ENCODE measurements at regions of chr17 and their contacts with region 1.

Region 1: DNA sequence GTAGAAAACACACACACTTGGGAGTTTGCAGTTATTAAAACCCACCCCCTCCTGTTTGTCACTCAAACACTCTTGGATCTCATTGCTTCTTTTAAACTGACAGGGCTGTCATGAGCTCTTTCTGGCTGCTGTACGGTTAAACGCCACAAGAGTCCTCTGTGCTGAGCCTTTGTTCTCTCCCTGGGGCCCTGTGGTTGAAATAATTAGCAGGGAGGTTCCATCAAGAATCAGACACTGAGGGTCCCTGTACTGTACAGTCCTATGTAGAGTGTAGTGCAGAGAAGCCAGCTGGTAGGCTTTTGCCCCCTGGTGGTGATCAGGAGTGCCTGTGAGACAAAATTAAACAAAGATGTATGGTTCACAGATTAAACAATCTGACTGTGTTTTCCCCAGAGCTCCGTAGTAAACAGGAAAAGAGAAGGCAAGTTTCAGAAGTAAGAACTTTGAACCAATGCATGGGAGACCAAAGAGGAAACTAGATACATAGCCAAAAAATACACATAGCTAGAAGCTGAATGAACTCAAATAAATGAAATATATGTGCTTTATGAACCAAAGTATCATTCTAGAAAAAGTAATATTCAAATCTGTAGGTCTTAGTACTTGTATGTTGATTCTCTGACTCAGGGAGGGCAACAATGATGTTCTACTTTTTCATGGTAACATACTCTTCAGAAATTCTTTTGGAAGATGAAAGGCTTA is 1.4 kb upstream of the SSH2 start:
- DNase-seq: no peak

Region 2: GRCh38 chr17:29579866-29580771 is 351.3 kb before region 1 on chr17:
- intact Hi-C with region 1: loop called (anchors 5 kb)
- DNase-seq: peak; percentile 90

Region 3: GRCh38 chr17:29617125-29617480 is 314.3 kb before region 1 on chr17:
- intact Hi-C with region 1: loop called (anchors 10 kb)
- DNase-seq: peak; percentile 91

Region 4: GRCh38 chr17:29640413-29640812 is 291.0 kb before region 1 on chr17:
- intact Hi-C with region 1: loop called (anchors 5 kb)
- DNase-seq: no peak

Region 5: DNA sequence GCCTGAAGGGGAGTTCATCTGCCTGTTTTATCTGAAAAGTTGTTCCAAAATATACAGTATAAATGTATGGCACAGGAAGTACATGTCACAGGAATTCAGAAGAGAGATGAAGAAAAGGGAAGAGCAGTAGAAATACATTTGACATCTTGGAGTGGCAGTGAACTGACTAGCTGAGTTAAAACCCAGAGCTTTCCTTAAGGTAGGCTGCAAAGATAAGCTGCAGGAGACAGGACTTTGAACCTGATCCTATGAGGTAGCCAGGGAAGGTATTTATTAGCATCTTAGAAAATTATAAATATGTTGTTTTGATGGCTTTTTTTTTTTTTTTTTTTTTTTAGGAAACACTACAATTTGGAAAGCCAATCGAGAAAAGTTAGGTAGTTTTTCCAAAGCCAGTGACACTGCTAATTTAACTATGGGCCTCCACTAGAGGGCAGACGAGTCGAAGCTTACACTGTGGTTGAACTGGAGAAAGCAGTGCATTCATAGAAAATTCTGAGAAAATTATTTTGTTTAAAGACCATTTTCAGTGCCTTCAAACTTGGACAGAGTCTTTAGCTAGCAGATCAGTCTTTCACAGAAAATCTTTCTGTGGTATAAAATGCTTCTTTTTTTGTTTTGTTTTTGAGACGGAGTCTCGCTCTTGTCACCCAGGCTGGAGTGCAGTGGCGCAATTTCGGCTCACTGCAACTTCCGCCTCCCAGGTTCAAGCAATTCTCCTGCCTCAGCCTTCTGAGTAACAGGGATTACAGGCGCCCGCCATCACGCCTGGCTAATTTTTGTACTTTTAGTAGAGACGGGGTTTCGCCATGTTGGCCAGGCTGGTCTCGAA is 123.6 kb before region 1 on chr17:
- intact Hi-C with region 1: loop called (anchors 1 kb)
- DNase-seq: peak; percentile 78

Region 6: GRCh38 chr17:29838961-29839360 is 92.4 kb before region 1 on chr17:
- intact Hi-C with region 1: no loop called
- DNase-seq: no peak

Region 7: DNA sequence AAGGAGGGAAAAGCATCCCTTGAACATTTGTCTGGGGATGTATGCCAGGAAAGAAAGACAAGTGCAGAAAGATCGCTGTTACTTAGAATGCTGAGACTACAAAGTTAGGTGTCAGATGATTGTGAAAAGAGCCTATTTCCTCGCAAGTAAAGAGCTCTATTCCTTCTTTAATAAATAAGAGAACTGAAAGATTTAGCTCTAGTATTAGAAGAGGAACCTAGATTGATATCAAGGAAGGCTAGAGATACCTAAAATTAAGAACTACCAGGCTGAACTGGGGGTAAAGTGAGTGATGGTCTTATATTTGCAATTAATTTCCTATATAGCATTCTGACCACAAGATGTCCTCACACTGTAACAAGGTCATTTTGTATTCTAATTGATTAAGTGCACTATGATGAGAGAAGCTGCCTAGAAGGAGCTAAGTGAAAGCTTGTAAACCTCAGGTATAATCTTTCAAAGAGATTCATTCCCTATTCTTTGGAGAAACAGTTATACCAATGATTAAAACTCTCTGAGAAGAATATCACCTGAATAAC is 63.7 kb before region 1 on chr17:
- intact Hi-C with region 1: loop called (anchors 10 kb)
- DNase-seq: no peak